Tibial artery (tissue), 4 donors: ENCODE measurements at regions of chr6 and their contacts with region 1.

Region 1: DNA sequence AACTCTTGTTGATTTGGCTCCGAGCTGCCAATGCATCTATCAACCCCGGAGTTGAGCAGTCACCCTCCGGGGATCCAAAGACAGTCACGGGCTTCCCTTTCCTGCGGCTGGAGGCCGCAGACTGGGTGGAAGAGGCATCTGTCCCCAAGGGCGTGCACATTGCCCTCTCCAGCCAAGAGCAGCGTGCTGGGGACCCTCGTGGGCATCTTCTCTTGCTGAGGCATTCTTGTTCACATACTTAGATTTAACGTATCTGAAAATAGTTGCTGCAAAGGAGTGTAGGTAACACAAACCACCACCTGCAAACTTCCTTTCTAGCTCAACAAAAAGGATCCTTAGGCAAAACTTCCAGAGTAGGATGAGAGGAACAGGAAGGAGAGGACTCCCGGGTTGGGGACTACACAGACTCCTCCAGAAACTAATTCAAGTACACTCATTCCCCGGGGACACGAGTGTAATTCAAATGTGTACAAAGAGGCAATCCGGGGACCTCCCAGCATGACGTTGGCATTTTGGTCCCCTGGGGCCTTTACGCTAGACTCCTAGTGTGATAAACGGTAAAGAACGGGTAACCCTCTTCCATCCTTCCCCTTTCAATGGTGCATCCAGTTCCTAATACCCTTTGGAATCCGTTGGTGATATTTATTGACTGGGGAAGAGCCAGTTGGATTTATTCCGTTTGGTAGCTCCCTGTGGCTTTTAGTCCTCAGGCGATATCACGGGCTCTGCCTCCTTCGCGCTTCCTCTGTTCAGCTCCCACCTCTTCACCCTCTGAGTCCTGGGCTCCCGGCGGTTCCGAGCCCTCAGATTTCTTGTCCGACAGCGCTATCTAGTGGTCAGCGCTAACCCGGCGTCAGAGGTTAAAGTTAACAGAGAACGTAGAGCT is 2.7 kb upstream of the COL12A1 start:
- DNase-seq: peak; percentile 92
- H3K4me3 ChIP-seq: peak overlapping the region; percentile 38 to 39
- H3K27ac ChIP-seq: peak overlapping the region; percentile 53 to 68
- H3K4me1 ChIP-seq: peaks cover 0 to 30% (median 8%) of the 10 kb centered on the region in 4 donors
- H3K27me3 ChIP-seq: no peaks in the 10 kb centered on the region
- CTCF ChIP-seq: peak; percentile 85 to 93

Region 2: DNA sequence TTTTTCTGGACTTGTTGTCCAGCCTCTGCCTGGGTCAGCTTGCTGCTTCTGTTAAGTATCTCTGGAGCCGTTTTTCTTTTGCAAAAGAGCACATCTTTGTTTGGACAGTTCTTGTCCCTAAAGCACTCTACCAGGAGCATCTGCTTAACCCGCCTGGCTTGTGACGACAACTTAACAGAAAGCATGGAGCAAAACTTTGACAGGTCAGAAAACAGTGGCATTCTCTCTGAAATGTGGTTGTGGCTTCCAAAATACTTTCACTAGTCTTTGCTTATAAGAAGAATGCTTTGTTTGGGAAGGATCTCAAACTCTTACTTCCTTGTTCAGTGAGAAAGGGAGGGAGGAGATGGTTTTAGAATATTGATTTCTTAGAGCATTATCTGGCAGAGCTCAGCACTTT is 1465.0 kb before region 1 on chr6:
- intact Hi-C with region 1: loop called (anchors 5 kb)
- DNase-seq: no peak
- H3K4me3 ChIP-seq: no peak overlapping the region
- H3K27ac ChIP-seq: no peak overlapping the region
- H3K4me1 ChIP-seq: no peaks in the 10 kb centered on the region
- H3K27me3 ChIP-seq: no peaks in the 10 kb centered on the region
- CTCF ChIP-seq: no peak

Region 3: DNA sequence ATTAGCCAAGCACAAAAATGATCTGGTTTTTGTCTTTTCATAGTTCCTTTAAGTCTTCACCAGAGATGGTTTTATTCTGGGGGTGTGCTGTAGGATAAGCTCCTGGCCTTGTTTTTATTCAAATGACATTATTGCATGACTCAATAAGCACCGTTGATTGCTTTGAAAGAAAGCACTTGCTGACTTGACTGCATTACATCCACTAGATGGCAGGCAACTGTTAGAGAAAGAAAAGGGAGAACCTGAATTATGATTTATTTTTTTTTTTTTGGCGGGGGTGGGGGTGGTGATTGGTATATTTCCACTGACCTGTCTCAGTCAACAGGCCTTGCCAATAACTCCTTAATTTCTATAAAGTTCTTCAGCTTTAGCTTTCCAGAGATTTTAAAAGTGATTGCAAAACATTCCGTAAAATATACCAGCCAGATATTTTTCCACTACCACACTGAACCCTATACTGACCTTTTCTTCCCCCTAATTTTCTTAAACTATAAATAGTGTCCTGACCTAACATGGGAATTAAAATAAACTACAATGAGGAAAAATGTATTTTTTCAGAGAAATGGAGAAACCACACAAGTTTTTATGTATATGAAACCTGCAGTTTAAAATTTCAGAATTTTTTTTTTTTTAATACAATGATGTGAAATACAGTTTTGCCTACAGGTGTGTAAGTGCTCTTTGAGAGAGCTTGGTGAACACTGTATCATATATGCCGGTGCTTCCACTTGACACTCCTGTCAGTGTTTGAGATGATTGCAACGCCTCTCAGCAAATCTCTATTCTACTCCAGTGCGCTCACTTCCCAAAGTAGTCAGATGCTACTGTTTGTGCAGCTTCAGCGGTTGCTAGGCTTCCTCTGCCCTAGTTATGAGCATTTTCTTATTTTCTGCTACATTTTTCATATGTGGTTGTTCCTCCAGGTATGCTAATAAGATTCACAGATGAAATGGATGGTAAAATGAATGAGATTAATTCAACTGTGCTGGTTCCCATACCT is 1238.3 kb before region 1 on chr6:
- intact Hi-C with region 1: loop called (anchors 10 kb)
- DNase-seq: no peak
- H3K4me3 ChIP-seq: no peak overlapping the region
- H3K27ac ChIP-seq: no peak overlapping the region
- H3K4me1 ChIP-seq: peaks cover 0 to 12% (median 0%) of the 10 kb centered on the region in 4 donors
- H3K27me3 ChIP-seq: no peaks in the 10 kb centered on the region
- CTCF ChIP-seq: peak; percentile 44 to 46

Region 4: GRCh38 chr6:74410630-74411029 is 797.9 kb before region 1 on chr6:
- intact Hi-C with region 1: loop called (anchors 2 kb)
- DNase-seq: no peak
- H3K4me3 ChIP-seq: no peak overlapping the region
- H3K27ac ChIP-seq: no peak overlapping the region
- H3K4me1 ChIP-seq: no peaks in the 10 kb centered on the region
- H3K27me3 ChIP-seq: no peaks in the 10 kb centered on the region
- CTCF ChIP-seq: no peak

Region 5: DNA sequence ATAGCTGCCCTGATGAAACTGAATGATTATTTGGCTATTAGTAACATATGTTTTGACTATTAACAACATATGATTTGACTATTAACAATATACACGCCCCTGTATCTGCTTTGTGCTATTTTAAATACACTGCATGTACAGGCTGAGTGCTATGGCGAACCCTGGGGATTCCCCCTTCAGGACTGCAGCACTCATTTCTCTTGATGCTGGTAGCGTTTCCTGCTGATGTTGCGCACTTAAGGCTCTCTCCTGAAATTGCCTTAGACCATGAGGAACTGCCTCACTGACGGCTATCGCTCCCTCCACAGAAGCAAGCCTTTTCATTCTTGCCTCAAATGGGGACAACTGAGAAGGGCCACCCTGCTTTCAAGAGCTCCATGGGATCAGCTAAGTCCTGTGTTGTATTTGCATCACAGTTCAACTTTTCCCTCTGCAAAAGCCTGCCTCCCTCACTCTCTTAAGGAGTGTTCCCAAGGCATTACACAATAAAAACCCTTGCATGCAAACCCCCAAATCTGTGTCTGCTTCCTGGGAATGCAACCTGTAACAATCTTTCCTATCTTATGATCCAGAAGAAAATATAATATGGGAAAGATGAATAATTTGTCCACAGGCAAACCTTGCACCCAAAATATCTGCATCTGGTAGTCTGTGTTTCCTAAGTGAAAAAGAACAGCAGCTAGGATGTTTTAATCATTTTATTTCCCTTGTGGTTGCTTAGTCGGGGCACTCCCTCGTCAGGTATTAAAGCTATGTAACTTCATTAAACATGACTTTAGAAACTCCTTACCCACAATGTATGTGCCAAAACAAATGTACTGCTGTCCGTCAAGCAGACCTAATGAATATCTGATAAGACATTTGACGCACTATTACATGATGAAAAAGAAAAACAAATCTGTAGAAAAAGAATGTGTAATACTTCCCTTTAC is 459.1 kb before region 1 on chr6:
- intact Hi-C with region 1: loop called (anchors 10 kb)
- DNase-seq: no peak
- H3K4me3 ChIP-seq: no peak overlapping the region
- H3K27ac ChIP-seq: no peak overlapping the region
- H3K4me1 ChIP-seq: peaks cover 0 to 14% (median 2%) of the 10 kb centered on the region in 4 donors
- H3K27me3 ChIP-seq: no peaks in the 10 kb centered on the region
- CTCF ChIP-seq: no peak

Region 6: DNA sequence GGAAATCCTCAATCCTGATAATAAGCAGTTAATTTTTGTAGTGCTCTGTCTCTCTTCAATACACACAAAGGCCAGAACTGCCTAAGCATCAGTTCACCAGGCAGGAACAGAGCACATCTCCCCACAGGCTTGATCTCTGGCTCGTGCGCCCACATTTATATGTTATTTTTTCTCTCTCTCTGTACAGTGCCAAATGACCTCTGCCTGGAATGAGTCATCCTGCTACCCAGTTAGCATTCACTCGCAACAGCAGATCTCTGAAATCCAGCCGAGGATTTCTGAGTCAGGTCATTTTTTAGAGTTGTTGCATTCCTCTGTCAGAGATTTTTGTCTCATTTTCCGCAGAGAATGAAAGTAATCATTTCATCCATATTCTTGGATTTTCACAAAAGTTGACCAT is 109.8 kb before region 1 on chr6:
- intact Hi-C with region 1: loop called (anchors 5 kb)
- DNase-seq: peak; percentile 79 to 87
- H3K4me3 ChIP-seq: no peak overlapping the region
- H3K27ac ChIP-seq: peak overlapping the region; percentile 39 to 48
- H3K4me1 ChIP-seq: peaks cover 0 to 49% (median 16%) of the 10 kb centered on the region in 4 donors
- H3K27me3 ChIP-seq: no peaks in the 10 kb centered on the region
- CTCF ChIP-seq: no peak